ENCODE measurements at regions of chr12 and their contacts with region 1.

Region 1: DNA sequence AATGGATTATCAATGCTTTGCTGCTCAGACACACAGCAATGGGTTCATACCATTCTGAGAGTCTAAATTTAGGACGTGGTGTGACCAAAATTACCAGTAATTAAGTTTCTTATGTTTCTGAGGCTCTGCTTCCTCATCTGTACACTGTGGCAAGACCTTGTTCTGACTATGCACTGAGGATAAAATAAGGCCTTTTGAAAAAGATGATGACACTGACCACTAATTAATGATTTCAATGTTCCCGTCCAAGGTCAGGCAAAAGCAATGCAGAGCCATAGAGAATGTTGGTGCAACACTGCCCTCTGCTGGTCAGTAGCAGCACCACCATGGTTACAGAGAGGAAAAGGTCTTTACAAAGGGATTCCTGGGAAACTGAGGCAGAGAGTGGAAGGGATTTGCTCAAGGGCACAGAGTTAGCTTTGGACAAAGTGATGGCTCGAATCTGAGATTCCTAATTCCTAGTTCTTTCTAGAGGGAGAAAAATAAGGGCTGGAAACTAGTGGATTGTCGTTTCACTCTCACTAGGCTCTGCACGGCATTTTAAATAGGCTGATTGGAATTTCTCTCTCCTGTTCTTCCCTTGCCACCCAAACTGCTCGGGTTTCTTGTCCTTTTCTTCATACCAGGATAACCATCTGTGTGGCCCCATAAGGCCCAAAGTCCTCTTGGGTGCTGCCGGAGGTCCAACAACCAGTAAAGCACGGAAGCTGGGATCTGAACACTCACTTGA is 22.3 kb upstream of the P2RX7 start:
- DNase-seq: peak; percentile 77
- ATAC-seq: peak; percentile 84
- H3K4me3 ChIP-seq: no peak overlapping the region
- H3K27ac ChIP-seq: no peak overlapping the region
- H3K4me1 ChIP-seq: no peaks in the 10 kb centered on the region
- H3K27me3 ChIP-seq: no peaks in the 10 kb centered on the region
- CTCF ChIP-seq: peak; percentile 99

Region 2: GRCh38 chr12:120649442-120650232 is 460.7 kb before region 1 on chr12:
- CTCF ChIA-PET with region 1: no interaction called
- POLR2A ChIA-PET with region 1: interaction called, 5 read pairs
- intact Hi-C with region 1: loop called (anchors 5 kb)
- DNase-seq: no peak
- ATAC-seq: no peak
- H3K4me3 ChIP-seq: peak overlapping the region; percentile 64; the same call in 1 of the 2 replicates
- H3K27ac ChIP-seq: no peak overlapping the region
- H3K4me1 ChIP-seq: peaks cover 5% of the 10 kb centered on the region
- H3K27me3 ChIP-seq: no peaks in the 10 kb centered on the region
- CTCF ChIP-seq: peak; percentile 38; the same call in 1 of the 2 replicates

Region 3: GRCh38 chr12:120944645-120945231 is 165.6 kb before region 1 on chr12:
- CTCF ChIA-PET with region 1: no interaction called
- POLR2A ChIA-PET with region 1: no interaction called
- intact Hi-C with region 1: loop called (anchors 1 kb)
- DNase-seq: peak; percentile 72
- ATAC-seq: peak; percentile 93
- H3K4me3 ChIP-seq: no peak overlapping the region
- H3K27ac ChIP-seq: no peak overlapping the region
- H3K4me1 ChIP-seq: no peaks in the 10 kb centered on the region
- H3K27me3 ChIP-seq: no peaks in the 10 kb centered on the region
- CTCF ChIP-seq: peak; percentile 92

Region 4: GRCh38 chr12:121005346-121005815 is 105.0 kb before region 1 on chr12:
- CTCF ChIA-PET with region 1: interaction called, 3 read pairs
- POLR2A ChIA-PET with region 1: no interaction called
- intact Hi-C with region 1: loop called (anchors 1 kb)
- DNase-seq: peak; percentile 72
- ATAC-seq: peak; percentile 66
- H3K4me3 ChIP-seq: no peak overlapping the region
- H3K27ac ChIP-seq: no peak overlapping the region
- H3K4me1 ChIP-seq: no peaks in the 10 kb centered on the region
- H3K27me3 ChIP-seq: no peaks in the 10 kb centered on the region
- CTCF ChIP-seq: peak; percentile 84

Region 5: GRCh38 chr12:121060149-121061001 is 50.0 kb before region 1 on chr12:
- CTCF ChIA-PET with region 1: interaction called, 6 read pairs
- POLR2A ChIA-PET with region 1: no interaction called
- intact Hi-C with region 1: loop called (anchors 1 kb)
- DNase-seq: peak; percentile 75
- ATAC-seq: peak; percentile 71
- H3K4me3 ChIP-seq: peak overlapping the region; percentile 35; the same call in 1 of the 2 replicates
- H3K27ac ChIP-seq: no peak overlapping the region
- H3K4me1 ChIP-seq: no peaks in the 10 kb centered on the region
- H3K27me3 ChIP-seq: no peaks in the 10 kb centered on the region
- CTCF ChIP-seq: peak; percentile 64

Region 6: GRCh38 chr12:121095544-121096198 is 14.7 kb before region 1 on chr12:
- CTCF ChIA-PET with region 1: no interaction called
- POLR2A ChIA-PET with region 1: no interaction called
- intact Hi-C with region 1: no loop called
- DNase-seq: peak; percentile 69
- ATAC-seq: peak; percentile 94
- H3K4me3 ChIP-seq: peak overlapping the region; percentile 66
- H3K27ac ChIP-seq: no peak overlapping the region
- H3K4me1 ChIP-seq: peaks cover 6% of the 10 kb centered on the region; the same call in 1 of the 2 replicates
- H3K27me3 ChIP-seq: no peaks in the 10 kb centered on the region
- CTCF ChIP-seq: peak; percentile 82

Region 7: GRCh38 chr12:121175383-121176227 is 65.2 kb after region 1 on chr12:
- CTCF ChIA-PET with region 1: no interaction called
- POLR2A ChIA-PET with region 1: no interaction called
- intact Hi-C with region 1: no loop called
- DNase-seq: no peak
- ATAC-seq: no peak
- H3K4me3 ChIP-seq: no peak overlapping the region
- H3K27ac ChIP-seq: no peak overlapping the region
- H3K4me1 ChIP-seq: no peaks in the 10 kb centered on the region; the same call in 1 of the 2 replicates
- H3K27me3 ChIP-seq: no peaks in the 10 kb centered on the region
- CTCF ChIP-seq: no peak

Region 8: DNA sequence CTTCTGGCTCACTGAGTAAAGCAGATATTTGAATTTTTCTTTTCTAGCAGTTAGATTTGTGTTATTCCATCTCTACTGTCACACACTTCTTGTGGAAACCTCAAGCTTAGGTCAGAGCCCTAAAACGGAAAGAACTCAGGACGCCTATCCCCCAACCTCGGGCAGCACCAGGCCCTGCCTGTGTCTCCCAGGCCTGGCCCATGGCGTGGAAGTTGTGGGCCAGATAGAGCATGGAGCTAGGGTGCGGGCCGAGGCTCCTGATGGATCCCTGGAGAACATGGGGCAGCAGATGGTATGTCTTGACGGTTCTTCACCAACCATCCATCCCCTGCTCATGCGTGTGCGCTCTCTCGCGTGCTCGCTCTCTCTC is 120.1 kb after region 1 on chr12:
- CTCF ChIA-PET with region 1: interaction called, 5 read pairs
- POLR2A ChIA-PET with region 1: no interaction called
- intact Hi-C with region 1: loop called (anchors 1 kb)
- DNase-seq: no peak
- ATAC-seq: no peak; the same call in 1 of the 2 replicates
- H3K4me3 ChIP-seq: no peak overlapping the region
- H3K27ac ChIP-seq: no peak overlapping the region
- H3K4me1 ChIP-seq: peaks cover 22% of the 10 kb centered on the region
- H3K27me3 ChIP-seq: no peaks in the 10 kb centered on the region
- CTCF ChIP-seq: no peak

Region 9: DNA sequence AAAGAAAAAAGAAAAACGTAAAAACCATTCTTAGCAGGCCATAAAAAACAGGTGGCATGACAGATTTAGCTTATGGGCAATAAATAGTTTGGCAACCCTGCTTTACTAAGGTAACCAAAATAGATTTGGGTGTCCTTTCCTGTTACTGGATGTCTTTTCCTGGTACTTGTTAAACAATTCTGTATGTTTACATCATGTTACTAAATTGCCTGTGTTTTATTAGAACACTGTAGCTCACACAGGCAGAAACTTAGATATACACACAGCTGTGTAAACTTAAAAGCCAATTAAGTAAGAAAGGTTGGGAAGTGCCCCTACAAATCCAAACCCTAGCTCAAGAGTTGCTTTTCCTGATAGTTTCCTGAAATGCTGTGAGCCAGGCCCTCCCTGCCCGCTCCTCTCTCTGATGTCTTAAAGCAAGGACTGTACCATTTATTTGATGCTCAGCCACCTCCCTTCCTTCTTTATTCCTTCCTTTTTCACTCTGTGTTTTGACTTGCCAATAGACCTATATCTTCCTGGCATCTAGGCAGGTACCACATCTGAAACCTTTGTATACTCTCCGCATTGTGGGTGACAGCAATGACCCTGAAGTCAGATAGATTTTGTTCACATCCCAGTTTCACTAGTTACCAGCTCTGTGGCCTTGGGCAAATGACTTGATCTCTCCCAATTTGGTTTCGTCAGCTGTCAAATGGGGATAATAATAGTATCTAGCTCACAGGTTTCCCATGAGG is 189.9 kb after region 1 on chr12:
- CTCF ChIA-PET with region 1: no interaction called
- POLR2A ChIA-PET with region 1: no interaction called
- intact Hi-C with region 1: no loop called
- DNase-seq: no peak
- ATAC-seq: no peak
- H3K4me3 ChIP-seq: no peak overlapping the region
- H3K27ac ChIP-seq: no peak overlapping the region
- H3K4me1 ChIP-seq: peaks cover 13% of the 10 kb centered on the region
- H3K27me3 ChIP-seq: no peaks in the 10 kb centered on the region
- CTCF ChIP-seq: no peak

Measured in PC-3 (cell line).